CD4-positive, alpha-beta memory T cell (primary cell): ENCODE measurements at regions of chr2 and their contacts with region 1.

Region 1: DNA sequence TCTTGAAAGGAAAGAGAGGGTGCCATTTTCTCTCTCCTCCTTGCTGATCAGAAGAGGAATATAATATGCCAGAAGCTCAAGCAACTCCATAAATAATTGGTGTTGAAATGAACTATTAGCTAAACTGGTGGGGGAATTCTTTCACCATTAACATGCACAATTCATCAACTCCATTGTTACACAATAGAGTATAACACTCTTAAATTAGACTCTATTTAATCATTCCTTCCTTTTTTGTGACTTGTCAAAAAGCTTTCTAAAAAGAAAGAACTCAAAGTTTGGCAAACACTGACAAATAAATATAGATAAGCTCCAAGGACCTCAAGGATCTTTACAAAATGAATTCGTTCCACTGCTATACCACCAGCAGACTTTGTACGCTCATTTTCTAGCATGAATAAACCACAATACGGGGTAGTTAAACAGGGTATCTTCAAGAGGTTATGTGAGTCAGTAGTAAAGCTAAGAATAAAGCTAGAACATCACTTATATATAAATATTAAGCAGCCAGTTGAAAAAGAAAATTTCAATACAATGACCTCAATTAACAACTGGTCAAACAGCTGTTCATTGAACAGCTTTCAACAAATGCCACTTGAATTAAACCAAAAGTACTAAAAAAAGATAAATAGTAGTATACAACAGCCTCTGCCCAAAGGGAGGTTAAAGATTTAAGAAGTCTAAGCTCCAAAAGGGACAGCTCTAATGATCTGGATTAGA is 6.4 kb downstream of the TRAK2 start:
- DNase-seq: no peak
- H3K4me3 ChIP-seq: no peak overlapping the region
- H3K4me3 Mint-ChIP-seq: no peak overlapping the region
- H3K27ac ChIP-seq: no peak overlapping the region
- H3K27ac Mint-ChIP-seq: no peak overlapping the region
- H3K4me1 ChIP-seq: peaks cover 58% of the 10 kb centered on the region
- H3K4me1 Mint-ChIP-seq: peaks cover 42 to 65% (median 54%) of the 10 kb centered on the region in 4 donors
- H3K27me3 ChIP-seq: no peaks in the 10 kb centered on the region
- H3K27me3 Mint-ChIP-seq: no peaks in the 10 kb centered on the region

Region 2: GRCh38 chr2:201139836-201140604 is 304.9 kb before region 1 on chr2:
- CTCF ChIA-PET with region 1: no interaction called
- POLR2A ChIA-PET with region 1: no interaction called
- intact Hi-C with region 1: no loop called
- DNase-seq: no peak
- H3K4me3 ChIP-seq: no peak overlapping the region
- H3K4me3 Mint-ChIP-seq: no peak overlapping the region
- H3K27ac ChIP-seq: no peak overlapping the region
- H3K27ac Mint-ChIP-seq: peak overlapping the region in 6 of 7 donors; percentile 27 to 79 (median 68)
- H3K4me1 ChIP-seq: peaks cover 13% of the 10 kb centered on the region
- H3K4me1 Mint-ChIP-seq: peaks cover 20 to 38% (median 29%) of the 10 kb centered on the region in 4 donors
- H3K27me3 ChIP-seq: no peaks in the 10 kb centered on the region
- H3K27me3 Mint-ChIP-seq: no peaks in the 10 kb centered on the region

Region 3: GRCh38 chr2:201406077-201406662 is 38.7 kb before region 1 on chr2:
- CTCF ChIA-PET with region 1: no interaction called
- POLR2A ChIA-PET with region 1: no interaction called
- intact Hi-C with region 1: no loop called
- DNase-seq: no peak
- H3K4me3 ChIP-seq: no peak overlapping the region
- H3K4me3 Mint-ChIP-seq: peak overlapping the region in 1 of 8 donors; percentile 33
- H3K27ac ChIP-seq: no peak overlapping the region
- H3K27ac Mint-ChIP-seq: peak overlapping the region in 2 of 7 donors; percentile 29 to 31
- H3K4me1 ChIP-seq: peaks cover 39% of the 10 kb centered on the region
- H3K4me1 Mint-ChIP-seq: peaks cover 29 to 66% (median 44%) of the 10 kb centered on the region in 4 donors
- H3K27me3 ChIP-seq: no peaks in the 10 kb centered on the region
- H3K27me3 Mint-ChIP-seq: no peaks in the 10 kb centered on the region

Region 4: DNA sequence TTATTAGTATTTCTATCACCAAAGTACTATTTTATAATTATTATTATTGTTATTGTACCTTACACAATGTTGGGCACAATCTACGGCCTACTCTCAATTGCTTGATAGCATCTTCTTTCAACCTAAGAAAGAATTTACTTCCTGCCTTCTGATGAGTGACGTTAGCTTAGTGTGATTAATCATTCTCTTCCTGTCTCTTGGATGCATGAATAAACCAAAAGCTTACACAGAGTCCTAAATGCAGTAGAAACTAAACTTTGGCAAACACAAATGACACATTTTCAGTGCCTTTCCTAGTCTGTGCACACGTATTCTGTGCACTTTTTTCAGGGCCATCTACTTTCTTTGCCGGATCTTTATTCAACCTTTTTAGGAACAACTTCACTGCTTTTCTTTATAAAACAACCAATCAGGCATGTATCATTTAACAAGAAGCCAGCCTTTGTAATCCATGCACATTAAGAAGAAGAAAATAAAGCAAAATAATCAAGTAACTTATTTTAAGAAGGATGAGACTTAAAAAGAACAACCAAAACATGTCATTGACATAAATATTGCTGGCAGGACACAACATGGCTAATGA is 12.8 kb before region 1 on chr2:
- CTCF ChIA-PET with region 1: interaction called, 8 read pairs
- POLR2A ChIA-PET with region 1: interaction called, 154 read pairs
- intact Hi-C with region 1: loop called (anchors 1 kb)
- DNase-seq: peak in 4 of 5 donors; percentile 33 to 46 (median 42)
- H3K4me3 ChIP-seq: no peak overlapping the region
- H3K4me3 Mint-ChIP-seq: peak overlapping the region in 6 of 8 donors; percentile 7 to 83 (median 54)
- H3K27ac ChIP-seq: peak overlapping the region; percentile 42
- H3K27ac Mint-ChIP-seq: peak overlapping the region; percentile 43 to 94 (median 90)
- H3K4me1 ChIP-seq: peaks cover 52% of the 10 kb centered on the region
- H3K4me1 Mint-ChIP-seq: peaks cover 44 to 77% (median 61%) of the 10 kb centered on the region in 4 donors
- H3K27me3 ChIP-seq: no peaks in the 10 kb centered on the region
- H3K27me3 Mint-ChIP-seq: no peaks in the 10 kb centered on the region